CD14-positive monocyte (primary cell): ENCODE measurements at regions of chr13 and their contacts with region 1.

Region 1: GRCh38 chr13:77740931-77741596 is 43.6 kb downstream of the SLAIN1 start:
- DNase-seq: no peak
- H3K4me3 ChIP-seq: no peak overlapping the region
- H3K4me3 Mint-ChIP-seq: no peak overlapping the region
- H3K27ac ChIP-seq: no peak overlapping the region
- H3K27ac Mint-ChIP-seq: no peak overlapping the region
- H3K4me1 ChIP-seq: no peaks in the 10 kb centered on the region
- H3K4me1 Mint-ChIP-seq: no peaks in the 10 kb centered on the region
- H3K27me3 ChIP-seq: no peaks in the 10 kb centered on the region
- H3K27me3 Mint-ChIP-seq: no peaks in the 10 kb centered on the region
- CTCF ChIP-seq: no peak

Region 2: DNA sequence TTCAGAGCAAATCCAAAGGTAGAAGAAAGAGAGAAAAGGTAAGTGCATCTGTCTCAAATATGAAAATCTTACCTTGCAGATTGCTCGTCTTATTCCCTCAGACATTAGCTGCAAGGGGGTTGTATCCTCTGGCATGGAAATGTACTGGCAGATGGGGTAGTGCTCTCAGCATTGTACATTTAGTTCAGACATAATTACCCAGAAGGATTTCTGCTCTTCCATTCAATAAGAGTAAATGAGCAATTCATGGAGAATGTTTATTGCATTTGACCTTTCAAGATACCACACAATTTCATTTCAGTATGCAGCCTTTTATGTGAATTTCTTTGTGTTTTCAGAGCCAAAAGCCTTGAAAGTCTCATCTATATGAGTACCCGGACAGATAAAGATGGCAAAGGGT is 141.7 kb before region 1 on chr13:
- intact Hi-C with region 1: loop called in 1 of 2 experiments (anchors 10 kb)
- DNase-seq: no peak
- H3K4me3 ChIP-seq: no peak overlapping the region
- H3K4me3 Mint-ChIP-seq: no peak overlapping the region
- H3K27ac ChIP-seq: no peak overlapping the region
- H3K27ac Mint-ChIP-seq: no peak overlapping the region
- H3K4me1 ChIP-seq: no peaks in the 10 kb centered on the region
- H3K4me1 Mint-ChIP-seq: no peaks in the 10 kb centered on the region
- H3K27me3 ChIP-seq: no peaks in the 10 kb centered on the region
- H3K27me3 Mint-ChIP-seq: peaks cover 0 to 2% (median 1%) of the 10 kb centered on the region in 3 donors
- CTCF ChIP-seq: no peak

Region 3: DNA sequence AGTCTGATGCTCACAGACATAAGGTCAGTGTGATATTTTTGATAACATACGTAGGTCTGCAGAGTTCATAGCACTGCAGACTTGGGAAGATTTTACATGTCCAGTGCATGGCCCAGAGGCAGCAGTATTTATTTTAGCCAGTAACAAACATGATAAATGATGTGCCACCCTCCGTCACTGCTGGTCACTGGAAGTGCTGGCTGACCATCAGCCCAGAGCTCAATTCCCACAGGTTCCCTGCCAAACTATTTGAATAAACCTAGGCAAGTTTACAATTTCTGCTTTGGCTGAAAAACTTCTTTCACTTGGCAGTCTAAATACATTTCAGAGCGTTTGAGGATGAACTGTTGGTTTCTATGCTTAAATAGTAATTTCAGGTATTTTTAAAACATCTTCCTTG is 313.1 kb after region 1 on chr13:
- intact Hi-C with region 1: no loop called
- DNase-seq: no peak
- H3K4me3 ChIP-seq: no peak overlapping the region
- H3K4me3 Mint-ChIP-seq: no peak overlapping the region
- H3K27ac ChIP-seq: no peak overlapping the region
- H3K27ac Mint-ChIP-seq: no peak overlapping the region
- H3K4me1 ChIP-seq: no peaks in the 10 kb centered on the region
- H3K4me1 Mint-ChIP-seq: no peaks in the 10 kb centered on the region
- H3K27me3 ChIP-seq: no peaks in the 10 kb centered on the region
- H3K27me3 Mint-ChIP-seq: no peaks in the 10 kb centered on the region
- CTCF ChIP-seq: no peak